Transverse colon (tissue), 4 donors: ENCODE measurements at regions of chr1 and their contacts with region 1.

Region 1: GRCh38 chr1:168342572-168343280 is 62.0 kb downstream of the TBX19 start:
- DNase-seq: peak; percentile 91
- H3K4me3 ChIP-seq: peak overlapping the region in 1 of 4 donors; percentile 29
- H3K27ac ChIP-seq: peak overlapping the region; percentile 25 to 60 (median 42)
- H3K4me1 ChIP-seq: peaks cover 0 to 20% (median 7%) of the 10 kb centered on the region in 4 donors
- H3K27me3 ChIP-seq: no peaks in the 10 kb centered on the region
- CTCF ChIP-seq: peak; percentile 76 to 88 (median 80)
- EP300 ChIP-seq: no peak
- POLR2A ChIP-seq: no peak

Region 2: DNA sequence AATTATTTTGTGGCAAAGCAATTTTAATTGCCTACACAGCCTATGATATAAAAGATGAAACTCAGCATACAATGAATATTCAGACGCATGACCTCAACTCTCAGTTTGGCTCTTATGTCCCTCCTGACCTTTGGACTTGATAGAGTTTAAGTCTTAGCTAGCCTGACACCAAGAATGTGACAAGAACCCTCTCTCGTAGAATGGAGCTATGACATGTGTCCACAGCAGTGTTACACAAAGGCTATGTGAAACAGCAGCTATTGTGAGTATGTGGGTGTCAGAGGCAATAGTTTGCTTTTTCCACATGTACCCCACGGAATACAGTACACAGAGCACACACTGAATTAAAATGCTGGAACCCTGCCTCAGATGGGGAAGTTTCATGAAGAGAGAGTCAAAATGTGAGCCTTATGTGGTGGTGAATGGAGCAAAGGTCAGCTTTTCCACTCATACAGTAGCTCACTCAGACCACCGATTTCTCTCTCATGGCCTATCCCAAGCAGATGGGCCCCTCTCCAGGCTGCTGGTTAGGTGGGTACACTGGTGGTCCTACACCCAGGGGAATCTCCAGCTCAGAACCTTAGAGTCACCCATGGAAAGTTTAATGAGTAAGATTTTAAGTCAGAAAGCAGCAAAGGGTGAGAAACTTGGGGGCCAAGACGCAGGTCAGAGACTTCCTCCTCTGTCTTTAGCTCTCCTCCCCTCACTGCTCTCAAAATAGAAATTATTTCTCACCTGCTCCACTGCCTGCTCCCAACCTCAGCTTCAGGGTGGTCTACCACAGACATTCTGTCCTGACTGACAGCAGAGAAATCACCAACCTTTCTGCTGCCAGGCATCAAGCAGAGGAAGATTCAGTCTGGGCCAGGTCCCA is 211.2 kb after region 1 on chr1:
- in situ Hi-C with region 1: loop called in 1 of 4 experiments (anchors 25 kb)
- intact Hi-C with region 1: no loop called
- DNase-seq: no peak
- H3K4me3 ChIP-seq: no peak overlapping the region
- H3K27ac ChIP-seq: no peak overlapping the region
- H3K4me1 ChIP-seq: peaks cover 0 to 2% (median 0%) of the 10 kb centered on the region in 4 donors
- H3K27me3 ChIP-seq: no peaks in the 10 kb centered on the region
- CTCF ChIP-seq: no peak
- EP300 ChIP-seq: no peak
- POLR2A ChIP-seq: no peak

Region 3: DNA sequence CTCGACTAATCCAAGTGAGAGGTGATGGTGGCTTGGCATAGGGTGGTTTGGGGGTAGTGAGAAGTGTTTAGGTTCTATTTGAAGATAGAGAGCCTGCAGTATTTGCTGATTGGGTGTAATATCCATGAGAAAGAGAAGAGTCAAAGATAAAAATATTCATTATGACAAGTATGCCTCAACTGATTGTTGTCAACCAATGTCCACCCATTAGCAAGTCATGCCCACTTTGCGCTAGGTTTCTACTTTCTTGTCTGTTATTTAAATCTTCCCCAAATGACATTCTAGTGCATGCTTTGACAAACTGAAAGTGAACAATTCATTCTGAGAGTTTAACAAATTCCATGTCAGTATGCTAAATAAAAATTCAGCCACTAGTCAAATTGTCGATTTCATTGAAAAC is 229.9 kb after region 1 on chr1:
- in situ Hi-C with region 1: loop called in 3 of 4 experiments (anchors 10 to 25 kb)
- intact Hi-C with region 1: loop called (anchors 10 kb)
- DNase-seq: no peak
- H3K4me3 ChIP-seq: no peak overlapping the region
- H3K27ac ChIP-seq: no peak overlapping the region
- H3K4me1 ChIP-seq: no peaks in the 10 kb centered on the region
- H3K27me3 ChIP-seq: no peaks in the 10 kb centered on the region
- CTCF ChIP-seq: no peak
- EP300 ChIP-seq: no peak
- POLR2A ChIP-seq: no peak

Region 4: DNA sequence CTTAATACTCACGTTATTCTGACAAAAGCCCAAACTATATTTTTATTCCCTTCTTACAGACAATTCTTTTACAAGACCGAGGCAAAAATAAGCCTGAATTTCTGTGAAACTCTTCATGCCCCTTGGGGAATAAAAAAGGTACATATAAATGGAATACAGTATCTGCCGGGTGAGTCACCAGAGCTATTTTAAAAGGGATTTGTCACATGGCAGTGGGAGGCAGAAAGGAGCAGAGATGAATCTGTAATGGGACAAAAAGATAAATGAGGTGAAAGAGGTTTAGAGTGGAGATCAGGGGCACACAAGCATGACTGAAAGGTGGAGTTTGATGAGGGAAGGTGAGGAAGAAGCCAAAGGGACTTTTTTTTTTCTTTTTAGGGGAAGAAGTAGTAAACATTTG is 242.5 kb after region 1 on chr1:
- in situ Hi-C with region 1: loop called in 1 of 4 experiments (anchors 25 kb)
- intact Hi-C with region 1: no loop called
- DNase-seq: no peak
- H3K4me3 ChIP-seq: no peak overlapping the region
- H3K27ac ChIP-seq: no peak overlapping the region
- H3K4me1 ChIP-seq: no peaks in the 10 kb centered on the region
- H3K27me3 ChIP-seq: no peaks in the 10 kb centered on the region
- CTCF ChIP-seq: no peak
- EP300 ChIP-seq: no peak
- POLR2A ChIP-seq: no peak

Region 5: GRCh38 chr1:169348383-169349036 is 1005.8 kb after region 1 on chr1:
- in situ Hi-C with region 1: loop called in 1 of 4 experiments (anchors 10 kb)
- intact Hi-C with region 1: no loop called
- DNase-seq: no peak
- H3K4me3 ChIP-seq: no peak overlapping the region
- H3K27ac ChIP-seq: no peak overlapping the region
- H3K4me1 ChIP-seq: peaks cover 0 to 2% (median 0%) of the 10 kb centered on the region in 4 donors
- H3K27me3 ChIP-seq: no peaks in the 10 kb centered on the region
- CTCF ChIP-seq: peak; percentile 76 to 91 (median 84)
- EP300 ChIP-seq: no peak
- POLR2A ChIP-seq: no peak